Left ventricle myocardium superior (tissue), 1 donor: ENCODE measurements at regions of chr5 and their contacts with region 1.

Region 1: GRCh38 chr5:38831909-38832308 is 13.9 kb upstream of the OSMR start:
- DNase-seq: no peak
- ATAC-seq: peak; percentile 54

Region 2: GRCh38 chr5:38922199-38922598 is 90.3 kb after region 1 on chr5:
- intact Hi-C with region 1: loop called (anchors 10 kb)
- DNase-seq: peak; percentile 55
- ATAC-seq: peak; percentile 31